Cardiac septum (tissue), 1 donor: ENCODE measurements at regions of chr5 and their contacts with region 1.

Region 1: DNA sequence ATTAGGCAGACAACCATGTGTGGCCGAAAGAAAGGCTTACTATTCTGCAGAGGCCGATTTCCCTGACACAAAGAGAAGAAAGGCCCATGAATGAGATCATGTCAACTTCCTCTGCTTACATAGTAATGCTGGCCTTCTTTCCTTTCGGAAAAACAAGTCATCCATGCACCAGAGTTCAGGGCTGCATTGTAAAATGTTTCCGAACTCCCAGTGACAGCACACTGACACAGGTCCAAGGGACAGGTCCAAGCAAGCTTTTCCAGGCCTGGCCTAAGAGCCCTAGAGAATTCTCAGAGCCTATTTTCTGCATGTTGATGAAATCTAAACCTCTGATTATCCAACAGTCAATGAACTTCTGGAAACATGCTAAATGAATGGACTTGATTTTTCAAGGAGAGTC is 140.9 kb downstream of the ZNF608 start:
- DNase-seq: no peak

Region 2: DNA sequence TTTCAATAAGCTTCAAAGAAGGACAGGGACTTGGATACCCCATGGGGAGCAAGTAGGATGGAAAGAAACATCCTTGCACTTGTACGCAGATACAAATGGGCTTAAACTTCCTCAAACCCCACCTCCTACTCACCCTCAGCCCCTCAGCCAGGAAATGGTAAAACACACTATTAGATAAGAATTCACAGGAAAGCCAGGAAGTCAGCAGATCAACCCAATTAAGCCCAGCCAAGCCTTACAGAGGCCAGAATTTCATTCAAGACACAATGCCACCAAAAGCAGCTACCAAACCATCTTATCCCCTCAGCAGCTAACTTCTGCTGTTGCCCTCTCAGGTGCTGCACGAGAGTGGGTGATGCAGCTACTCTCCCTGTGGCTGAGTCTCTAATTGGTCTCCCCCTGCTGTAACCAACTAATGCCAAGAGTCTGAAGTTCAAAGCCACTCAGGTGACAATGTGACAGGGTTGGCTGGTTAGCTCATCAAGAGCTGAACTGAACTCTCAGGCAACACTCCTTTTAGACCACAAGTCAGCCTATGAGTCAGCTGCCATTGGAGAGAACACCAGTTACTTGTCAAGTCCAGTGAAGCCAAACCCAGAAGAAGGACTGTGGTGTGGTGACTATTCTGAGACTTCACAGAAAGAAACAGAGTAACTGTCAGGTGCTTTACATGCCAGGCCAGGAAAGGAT is 61.0 kb before region 1 on chr5:
- intact Hi-C with region 1: loop called (anchors 5 kb)
- DNase-seq: no peak